ENCODE measurements at regions of chr11 and their contacts with region 1.

Region 1: DNA sequence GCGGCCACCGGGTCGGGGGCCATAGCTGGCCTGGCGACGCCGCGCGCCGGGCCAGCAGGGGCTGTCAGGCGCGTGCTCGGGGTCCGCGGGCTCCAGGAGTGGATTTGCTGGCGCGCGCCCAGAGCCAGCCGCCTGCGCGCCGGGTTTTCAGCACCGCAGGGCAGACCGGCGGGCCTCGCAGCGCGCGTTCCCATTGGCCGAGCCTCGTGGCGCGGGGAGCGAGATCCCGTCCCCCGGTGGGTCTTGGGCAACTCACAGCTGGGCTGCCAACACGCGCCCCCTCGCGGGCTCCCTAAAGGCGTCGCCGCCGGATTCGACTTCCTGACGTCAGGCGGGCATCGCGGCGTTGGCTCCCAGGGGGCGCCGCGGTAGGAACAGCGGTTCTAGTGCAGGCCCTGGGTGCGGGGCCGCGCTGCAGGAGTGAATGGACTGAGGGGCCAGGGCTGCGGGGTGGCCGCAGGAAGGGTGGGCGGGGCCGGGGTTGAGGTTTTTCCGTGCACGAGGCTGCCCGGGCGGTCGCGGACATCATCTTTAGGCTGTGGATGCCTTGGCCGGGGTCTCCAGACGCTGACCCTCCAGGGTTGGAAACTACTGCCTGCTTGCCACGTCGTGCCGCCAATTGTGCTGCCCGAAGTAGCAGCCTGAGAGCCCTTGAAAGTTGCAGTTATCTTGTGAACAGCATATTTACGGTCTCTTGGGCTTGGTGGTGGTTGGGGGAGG is at the start of gene FADS1:
- DNase-seq: peak; percentile 64
- H3K4me3 ChIP-seq: peak within 1 kb of the TSS; percentile 60 to 66
- H3K27ac ChIP-seq: peak within 1 kb of the TSS; percentile 87 to 94
- H3K4me1 ChIP-seq: no peaks in the 10 kb centered on the region
- H3K27me3 ChIP-seq: no peaks in the 10 kb centered on the region
- CTCF ChIP-seq: peak; percentile 22 to 67 (median 54)
- POLR2A ChIP-seq: no peak
- total RNA-seq, gene FADS1: 15.0 to 38.7 TPM

Region 2: GRCh38 chr11:61891331-61892084 is 74.6 kb after region 1 on chr11 and contains the start of gene FADS3:
- intact Hi-C with region 1: loop called (anchors 5 kb)
- DNase-seq: peak; percentile 71
- H3K4me3 ChIP-seq: peak within 1 kb of the TSS; percentile 73 to 85
- H3K27ac ChIP-seq: peak within 1 kb of the TSS; percentile 70 to 72
- H3K4me1 ChIP-seq: peaks cover 9% of the 10 kb centered on the region
- H3K27me3 ChIP-seq: no peaks in the 10 kb centered on the region
- CTCF ChIP-seq: peak in 2 of 4 experiments; percentile 3 to 4
- POLR2A ChIP-seq: peak; percentile 14
- total RNA-seq, gene FADS3: 18.5 to 74.9 TPM

Region 3: GRCh38 chr11:61971248-61972111 is 154.6 kb after region 1 on chr11:
- intact Hi-C with region 1: loop called (anchors 5 kb)
- DNase-seq: peak; percentile 98
- H3K4me3 ChIP-seq: no peak overlapping the region
- H3K27ac ChIP-seq: peak overlapping the region; percentile 96
- H3K4me1 ChIP-seq: peaks cover 30% of the 10 kb centered on the region
- H3K27me3 ChIP-seq: no peaks in the 10 kb centered on the region
- CTCF ChIP-seq: no peak
- POLR2A ChIP-seq: no peak